ENCODE measurements at regions of chr13 and their contacts with region 1.

Region 1: DNA sequence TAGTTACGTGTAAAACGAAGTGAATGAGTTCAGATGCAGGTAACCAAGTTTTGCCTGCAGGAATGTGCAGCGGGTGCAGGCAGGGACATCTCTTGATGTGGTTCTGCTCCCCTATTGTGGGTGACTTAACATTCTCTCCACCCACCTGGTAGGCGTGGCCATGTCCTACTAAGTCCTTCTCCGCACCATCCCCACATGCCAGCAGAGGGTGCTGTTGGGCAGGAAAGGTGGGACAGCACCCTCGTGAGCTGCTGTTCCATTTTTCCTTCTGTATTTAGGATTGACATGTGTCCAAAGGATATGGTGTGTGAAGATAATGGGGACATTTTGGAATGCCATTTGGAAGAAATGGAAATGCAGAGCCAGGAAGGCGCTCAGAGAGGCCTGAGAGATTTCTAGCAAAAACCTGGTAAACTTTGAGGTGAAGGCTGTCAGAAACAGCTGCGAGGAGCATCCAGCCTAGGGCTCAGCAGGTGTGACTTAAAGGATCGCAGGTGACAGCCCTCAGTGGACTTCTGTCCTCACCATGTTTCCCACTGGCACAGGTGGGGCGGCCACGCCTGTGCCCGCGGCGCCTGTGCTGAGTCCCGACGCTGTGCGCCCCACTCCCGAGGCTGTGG is 26.2 kb upstream of the MCF2L start:
- DNase-seq: peak; percentile 94 to 100 (median 98)
- ATAC-seq: peak; percentile 97
- H3K4me3 ChIP-seq: no peak overlapping the region
- H3K4me1 ChIP-seq: peaks cover 10% of the 10 kb centered on the region
- CTCF ChIP-seq: peak; percentile 89

Region 2: DNA sequence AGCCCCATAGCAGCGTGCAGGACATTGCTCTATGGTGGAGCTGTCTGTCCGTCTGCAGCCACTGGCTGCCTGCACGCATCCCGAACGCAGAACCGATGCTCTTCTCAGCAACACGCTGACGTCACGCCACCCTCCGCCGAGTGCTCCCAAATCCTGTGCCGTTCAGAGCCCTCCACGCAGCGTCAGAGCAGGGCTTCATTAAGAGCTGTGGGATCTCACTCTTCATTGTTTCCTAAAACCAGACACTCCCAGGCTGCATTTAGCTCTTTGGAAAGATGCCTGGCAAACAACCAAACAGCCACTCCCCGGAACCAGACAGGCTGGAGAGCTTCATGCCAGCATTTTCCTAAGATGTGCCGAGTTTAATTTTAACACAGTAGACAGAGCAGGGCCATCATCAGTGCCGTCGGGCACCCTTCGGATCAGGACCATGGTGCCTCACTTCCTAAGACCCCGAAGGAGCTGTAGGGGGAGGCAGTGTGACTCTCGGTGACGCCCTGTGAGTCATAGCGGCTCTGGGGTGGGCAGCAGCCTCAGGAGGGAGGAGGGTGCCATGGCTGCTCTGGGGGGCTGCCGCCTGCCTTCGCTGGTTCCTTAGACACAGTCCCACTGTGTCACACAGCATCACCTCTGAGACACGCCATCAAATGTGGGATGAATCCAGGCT is 105.3 kb before region 1 on chr13:
- intact Hi-C with region 1: no loop called
- DNase-seq: no peak
- ATAC-seq: no peak
- H3K4me3 ChIP-seq: no peak overlapping the region
- H3K4me1 ChIP-seq: no peaks in the 10 kb centered on the region
- CTCF ChIP-seq: no peak

Region 3: DNA sequence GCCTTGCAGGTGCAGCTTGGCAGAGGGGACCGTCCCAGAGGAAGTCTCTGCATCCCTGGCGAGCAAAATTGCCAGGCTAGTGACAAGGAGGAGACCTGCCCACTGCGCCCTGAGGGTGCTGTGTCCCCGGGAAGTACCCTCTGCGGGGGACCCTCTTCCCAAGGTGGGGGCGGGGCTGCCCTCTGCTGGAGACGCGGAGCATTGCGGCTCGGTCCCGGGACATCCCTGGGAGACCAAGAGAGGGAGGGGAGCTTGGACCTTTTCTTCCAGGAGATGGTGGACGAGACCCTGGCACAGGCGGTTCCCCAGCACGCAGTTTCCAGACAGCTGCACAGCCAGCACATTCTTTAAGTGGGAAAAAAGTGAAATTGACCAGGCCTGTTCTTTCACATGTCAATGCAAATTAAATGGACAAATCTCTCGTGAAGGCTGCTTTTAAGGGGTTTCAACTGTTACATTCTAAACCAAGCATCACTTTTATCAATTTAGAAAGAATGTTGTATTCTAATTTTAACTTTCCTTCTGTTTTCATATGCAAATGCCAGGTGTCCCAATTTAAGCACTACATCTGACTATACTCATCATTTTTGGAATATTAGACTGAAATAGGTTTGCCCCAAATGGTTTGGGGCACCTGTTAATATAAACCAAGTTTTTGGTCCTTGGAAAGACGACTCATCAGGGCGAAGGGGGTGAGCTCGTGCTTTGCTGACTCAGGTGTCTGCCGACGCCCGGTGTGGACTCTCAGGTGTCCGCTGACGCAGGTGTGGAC is 86.9 kb after region 1 on chr13:
- intact Hi-C with region 1: loop called in 1 of 2 experiments (anchors 10 kb)
- DNase-seq: peak in 2 of 3 donors; percentile 65 to 67
- ATAC-seq: peak; percentile 68
- H3K4me3 ChIP-seq: no peak overlapping the region
- H3K4me1 ChIP-seq: no peaks in the 10 kb centered on the region
- CTCF ChIP-seq: peak; percentile 74

Region 4: DNA sequence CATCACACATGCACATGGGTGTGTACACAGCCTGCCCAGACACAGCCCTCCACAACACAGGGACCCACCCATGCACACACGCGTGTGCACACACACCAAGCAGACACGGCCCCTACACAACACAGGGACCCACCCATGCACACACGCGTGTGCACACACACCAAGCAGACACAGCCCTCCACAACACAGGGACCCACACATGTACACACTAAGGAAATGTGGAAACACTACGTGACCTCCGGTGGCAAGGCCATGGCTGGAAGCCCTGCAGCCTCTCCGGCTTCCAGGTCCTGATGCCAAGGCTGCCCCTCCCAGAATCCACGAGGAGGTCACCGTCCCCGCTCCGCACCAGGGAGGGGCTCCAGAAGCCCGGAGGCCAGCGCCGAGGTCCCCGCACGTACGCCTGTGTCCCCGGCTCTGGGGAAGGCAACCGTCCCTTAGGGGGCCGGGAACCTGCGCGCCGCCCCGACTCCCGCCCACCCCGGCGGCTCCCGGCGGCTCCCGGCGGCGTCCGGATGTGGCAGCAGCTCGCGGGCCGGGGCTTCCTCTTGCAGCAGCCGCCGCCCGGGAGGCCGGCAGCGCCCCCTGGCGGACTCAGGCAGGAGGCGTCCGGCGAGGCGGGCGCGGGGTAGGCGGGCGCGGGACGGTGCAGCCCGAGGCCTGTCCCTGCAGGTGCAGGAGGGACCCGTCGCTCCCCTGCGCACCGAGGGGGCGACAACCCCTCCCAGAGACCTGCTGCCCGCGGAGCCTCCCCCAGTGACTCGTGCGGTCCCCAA is 451.0 kb after region 1 on chr13:
- intact Hi-C with region 1: loop called in 1 of 2 experiments (anchors 10 kb)
- DNase-seq: peak; percentile 81 to 87 (median 86)
- ATAC-seq: peak; percentile 97
- H3K4me3 ChIP-seq: peak overlapping the region; percentile 36
- H3K4me1 ChIP-seq: peaks cover 8% of the 10 kb centered on the region
- CTCF ChIP-seq: peak; percentile 93